Activated naive CD4-positive, alpha-beta T cell treated with anti-CD3 and anti-CD28 coated beads for 36 hours (primary cell): ENCODE measurements at regions of chr5 and their contacts with region 1.

Region 1: DNA sequence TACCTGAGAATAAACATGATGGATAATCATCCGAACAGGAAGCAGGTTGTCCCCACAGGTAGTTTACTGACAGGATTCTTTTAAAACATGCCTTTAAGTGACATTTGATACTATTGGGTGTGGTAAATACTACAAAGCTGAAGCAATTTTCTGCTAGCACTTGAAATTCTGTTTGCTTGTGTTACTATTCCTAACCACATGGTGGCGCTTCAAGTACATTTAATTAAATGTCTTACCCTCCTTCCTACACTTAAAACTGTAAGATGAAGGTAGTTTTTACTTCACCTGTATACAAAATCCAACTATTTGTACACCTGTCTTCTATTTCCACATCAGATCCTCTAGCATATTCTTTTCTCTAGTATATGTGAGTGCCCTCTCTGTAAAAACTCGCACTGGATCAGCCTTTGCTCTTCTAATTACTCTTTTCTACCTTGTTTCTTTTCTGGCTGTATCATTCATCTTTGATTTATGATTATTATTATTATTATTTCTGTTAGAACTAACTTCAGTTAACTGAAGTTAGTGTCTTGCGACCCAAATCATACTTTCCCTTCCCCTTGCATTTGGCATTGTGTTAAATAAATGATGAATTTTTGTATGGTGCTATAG is 18.4 kb downstream of the SLC25A46 start:
- DNase-seq: peak; percentile 38
- H3K4me3 Mint-ChIP-seq: no peak overlapping the region
- H3K27ac Mint-ChIP-seq: no peak overlapping the region
- H3K4me1 Mint-ChIP-seq: peaks cover 26% of the 10 kb centered on the region
- H3K27me3 Mint-ChIP-seq: no peaks in the 10 kb centered on the region

Region 2: DNA sequence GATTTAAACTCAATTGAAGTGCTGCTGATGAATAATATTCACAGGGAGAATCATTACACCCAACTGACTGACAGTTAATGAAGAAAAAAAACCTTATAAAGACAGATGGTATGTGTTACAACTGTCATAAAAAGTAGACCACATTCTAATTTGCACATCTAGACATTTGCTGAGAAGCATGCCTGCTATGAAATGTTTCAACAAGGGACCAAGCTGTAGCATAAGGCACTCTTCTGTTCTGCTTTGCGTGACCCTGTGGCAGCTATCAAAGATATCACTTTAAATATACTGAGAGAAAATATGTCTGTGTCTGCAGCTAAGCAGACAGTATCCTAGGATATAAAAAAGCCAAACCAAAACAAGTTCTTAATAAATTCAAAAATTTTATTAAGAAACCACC is 184.5 kb before region 1 on chr5:
- CTCF ChIA-PET with region 1: no interaction called
- intact Hi-C with region 1: no loop called
- DNase-seq: no peak
- H3K4me3 Mint-ChIP-seq: no peak overlapping the region
- H3K27ac Mint-ChIP-seq: no peak overlapping the region
- H3K4me1 Mint-ChIP-seq: no peaks in the 10 kb centered on the region
- H3K27me3 Mint-ChIP-seq: no peaks in the 10 kb centered on the region

Region 3: GRCh38 chr5:110769000-110769681 is 11.9 kb after region 1 on chr5:
- CTCF ChIA-PET with region 1: no interaction called
- intact Hi-C with region 1: no loop called
- DNase-seq: no peak
- H3K4me3 Mint-ChIP-seq: no peak overlapping the region
- H3K27ac Mint-ChIP-seq: no peak overlapping the region
- H3K4me1 Mint-ChIP-seq: no peaks in the 10 kb centered on the region
- H3K27me3 Mint-ChIP-seq: peaks cover 5% of the 10 kb centered on the region

Region 4: GRCh38 chr5:110865400-110866094 is 108.3 kb after region 1 on chr5:
- CTCF ChIA-PET with region 1: interaction called, 3 read pairs
- intact Hi-C with region 1: loop called (anchors 1 kb)
- DNase-seq: peak; percentile 19
- H3K4me3 Mint-ChIP-seq: no peak overlapping the region
- H3K27ac Mint-ChIP-seq: no peak overlapping the region
- H3K4me1 Mint-ChIP-seq: no peaks in the 10 kb centered on the region
- H3K27me3 Mint-ChIP-seq: peaks cover 11% of the 10 kb centered on the region

Region 5: GRCh38 chr5:111092062-111092853 is 335.0 kb after region 1 on chr5 and contains the start of gene WDR36:
- CTCF ChIA-PET with region 1: interaction called, 4 read pairs
- intact Hi-C with region 1: loop called (anchors 1 kb)
- DNase-seq: peak; percentile 92
- H3K4me3 Mint-ChIP-seq: peak within 1 kb of the TSS; percentile 99
- H3K27ac Mint-ChIP-seq: peak within 1 kb of the TSS; percentile 90
- H3K4me1 Mint-ChIP-seq: peaks cover 42% of the 10 kb centered on the region
- H3K27me3 Mint-ChIP-seq: peaks cover 8% of the 10 kb centered on the region
- total RNA-seq, gene WDR36: 34.1 to 40.3 TPM

Region 6: DNA sequence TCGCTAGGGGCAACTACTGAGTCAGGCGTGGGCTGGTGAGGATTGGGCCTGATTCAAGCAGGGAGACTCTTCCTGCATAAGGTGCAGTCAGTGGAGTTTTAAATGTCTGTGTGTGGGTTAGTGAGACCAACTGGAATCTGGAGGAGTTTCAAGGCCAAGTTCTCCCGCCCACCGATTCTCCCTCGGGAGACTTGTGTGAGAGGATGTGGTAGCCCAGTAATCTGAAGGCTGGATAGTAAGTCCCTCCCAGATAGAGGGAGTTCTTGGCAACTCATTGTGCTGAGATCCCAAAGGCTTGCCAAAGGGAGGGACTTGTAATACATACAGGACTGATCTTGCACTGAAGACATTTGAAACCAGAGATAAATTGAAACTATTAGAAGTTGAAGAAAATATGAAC is 386.7 kb after region 1 on chr5:
- CTCF ChIA-PET with region 1: no interaction called
- intact Hi-C with region 1: loop called (anchors 1 kb)
- DNase-seq: no peak
- H3K4me3 Mint-ChIP-seq: no peak overlapping the region
- H3K27ac Mint-ChIP-seq: no peak overlapping the region
- H3K4me1 Mint-ChIP-seq: peaks cover 6% of the 10 kb centered on the region
- H3K27me3 Mint-ChIP-seq: no peaks in the 10 kb centered on the region

Region 7: DNA sequence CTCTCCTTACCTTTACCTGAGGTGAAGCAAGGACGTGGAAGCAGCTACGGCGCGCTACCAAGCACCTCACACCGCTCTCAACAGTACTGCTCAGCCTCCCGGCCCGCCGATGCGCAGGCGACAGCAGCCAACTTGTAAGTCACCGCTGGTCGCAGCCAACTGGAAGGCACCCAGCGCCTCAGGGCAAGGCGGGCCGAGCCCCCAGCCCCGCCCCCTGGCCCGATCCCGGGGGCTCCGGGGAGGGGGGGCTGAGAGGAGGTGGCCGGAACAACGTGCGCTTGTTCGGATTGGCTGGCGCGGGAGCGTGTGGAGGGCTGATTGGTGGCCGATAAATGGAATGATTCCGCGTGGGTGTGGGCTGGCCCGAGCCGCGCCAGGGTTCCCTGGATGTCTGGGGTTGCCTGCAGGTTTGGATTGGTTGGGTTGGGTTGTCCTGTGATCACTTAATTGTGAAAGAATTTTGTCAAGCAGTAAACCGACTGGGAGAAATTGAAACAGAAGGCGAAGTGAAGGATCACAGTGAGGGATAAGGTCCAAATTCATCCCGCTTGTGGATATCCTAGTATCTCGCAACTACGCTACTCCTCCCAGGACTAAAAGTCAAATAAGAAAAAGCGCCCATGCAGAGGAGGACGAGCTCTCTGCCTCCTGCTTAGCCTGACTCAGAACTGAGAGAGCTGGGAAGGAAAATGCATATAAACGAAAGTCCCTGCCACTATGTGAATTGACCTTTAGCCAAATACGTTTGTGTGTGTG is 755.3 kb after region 1 on chr5 and contains the start of gene STARD4:
- CTCF ChIA-PET with region 1: no interaction called
- intact Hi-C with region 1: loop called (anchors 10 kb)
- DNase-seq: peak; percentile 95
- H3K4me3 Mint-ChIP-seq: peak within 1 kb of the TSS; percentile 93
- H3K27ac Mint-ChIP-seq: peak within 1 kb of the TSS; percentile 94
- H3K4me1 Mint-ChIP-seq: peaks cover 37% of the 10 kb centered on the region
- H3K27me3 Mint-ChIP-seq: no peaks in the 10 kb centered on the region
- total RNA-seq, gene STARD4: 45.0 to 47.1 TPM